GM12878 (cell line): ENCODE measurements at regions of chr3 and their contacts with region 1.

Region 1: GRCh38 chr3:156151824-156152428 is 31.5 kb downstream of the KCNAB1 start:
- DNase-seq: no peak
- ATAC-seq: peak; percentile 82
- H3K4me3 ChIP-seq: no peak overlapping the region
- H3K27ac ChIP-seq: no peak overlapping the region
- H3K4me1 ChIP-seq: no peaks in the 10 kb centered on the region
- H3K27me3 ChIP-seq: no peaks in the 10 kb centered on the region
- CTCF ChIP-seq: peak; percentile 72 to 78 (median 75)
- EP300 ChIP-seq: no peak
- POLR2A ChIP-seq: no peak
- RAD21 ChIP-seq: peak; percentile 85

Region 2: DNA sequence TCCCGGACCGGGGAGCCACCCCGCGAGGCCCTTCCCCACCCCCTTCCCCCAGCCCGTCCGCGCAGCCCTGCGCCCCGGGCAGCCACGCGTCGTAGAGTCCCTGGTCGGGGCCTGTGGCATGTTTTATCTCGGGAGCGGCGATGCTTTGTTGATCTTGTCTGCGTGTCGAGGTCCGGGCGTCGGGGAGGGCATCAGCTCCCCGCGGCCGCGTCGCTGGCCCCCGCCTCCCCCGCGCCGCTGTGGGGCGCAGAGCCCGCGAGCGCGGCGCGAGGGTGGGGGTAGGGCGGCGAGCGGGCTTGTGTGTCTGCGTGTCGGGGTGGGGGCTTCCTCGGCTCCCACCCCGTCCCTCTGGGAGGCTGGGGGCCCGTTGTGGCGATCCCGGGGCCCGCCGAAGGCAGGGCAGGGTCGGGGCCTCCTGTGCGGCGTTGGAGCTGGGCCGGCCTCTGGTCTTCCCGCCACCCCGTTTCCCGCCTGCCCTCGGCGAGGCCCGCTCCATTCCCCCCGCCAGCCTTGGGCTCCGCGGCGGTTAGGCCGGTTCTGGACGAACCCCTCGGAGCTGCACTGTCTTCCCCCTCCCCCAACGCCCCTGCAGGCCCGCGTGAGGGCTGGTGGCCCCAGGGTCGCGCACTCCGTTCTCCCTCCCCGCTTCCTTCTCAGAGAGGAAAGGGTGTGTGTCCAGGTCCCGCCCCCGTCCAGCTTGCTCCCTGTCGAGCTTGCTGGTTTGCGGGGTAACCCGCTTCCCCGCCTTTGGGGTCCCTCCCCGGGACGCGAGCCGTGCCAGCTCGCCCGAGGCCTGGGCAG is 280.8 kb before region 1 on chr3:
- CTCF ChIA-PET with region 1: no interaction called
- POLR2A ChIA-PET with region 1: no interaction called
- RAD21 ChIA-PET with region 1: no interaction called
- SMC1A ChIA-PET with region 1: no interaction called
- in situ Hi-C with region 1: no loop called
- intact Hi-C with region 1: no loop called
- DNase-seq: no peak
- ATAC-seq: peak; percentile 53
- H3K4me3 ChIP-seq: peak overlapping the region; percentile 85
- H3K27ac ChIP-seq: peak overlapping the region; percentile 89
- H3K4me1 ChIP-seq: peaks cover 2% of the 10 kb centered on the region
- H3K27me3 ChIP-seq: no peaks in the 10 kb centered on the region
- CTCF ChIP-seq: no peak
- EP300 ChIP-seq: no peak
- POLR2A ChIP-seq: peak; percentile 52
- RAD21 ChIP-seq: no peak

Region 3: DNA sequence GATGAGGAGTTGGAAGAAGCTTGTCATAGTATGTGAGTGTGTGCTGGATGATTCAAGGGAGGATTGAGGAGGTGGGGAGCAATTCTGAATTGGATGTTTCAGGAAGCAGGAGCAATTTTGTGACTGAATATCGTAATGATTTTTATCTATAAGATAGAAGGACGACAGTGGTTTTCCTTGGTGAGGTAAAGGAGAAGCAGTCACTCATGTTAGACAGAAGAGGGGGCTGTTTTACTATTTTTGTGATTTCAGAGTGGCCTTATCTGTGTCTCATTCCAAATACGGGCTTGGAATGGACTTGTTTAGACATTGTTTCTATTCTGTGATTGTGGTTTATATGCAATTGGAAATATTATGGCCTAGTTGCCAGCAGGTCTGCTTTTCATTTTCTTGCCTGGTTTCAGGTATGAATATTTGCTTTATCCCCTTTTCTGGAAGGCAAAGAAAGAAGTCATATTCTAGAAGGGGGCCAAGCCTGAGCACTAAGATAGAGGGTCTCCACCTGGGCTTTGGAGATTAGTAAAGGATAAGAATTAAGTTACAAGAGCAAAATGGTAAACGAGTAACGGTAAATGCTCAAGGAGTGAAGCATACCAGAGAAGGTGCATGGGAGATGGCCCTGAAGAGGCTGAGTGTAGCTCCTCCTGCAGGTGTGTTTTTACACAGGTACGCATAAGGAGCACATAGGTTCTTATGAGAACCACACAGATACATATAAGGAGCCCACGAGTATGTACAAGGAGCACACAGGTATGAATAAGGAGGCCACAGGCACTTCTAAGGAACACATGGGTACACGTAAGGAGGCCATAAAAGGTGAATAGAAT is 156.2 kb before region 1 on chr3:
- CTCF ChIA-PET with region 1: no interaction called
- POLR2A ChIA-PET with region 1: no interaction called
- RAD21 ChIA-PET with region 1: no interaction called
- SMC1A ChIA-PET with region 1: no interaction called
- in situ Hi-C with region 1: no loop called
- intact Hi-C with region 1: no loop called
- DNase-seq: no peak
- ATAC-seq: peak; percentile 73
- H3K4me3 ChIP-seq: no peak overlapping the region
- H3K27ac ChIP-seq: no peak overlapping the region
- H3K4me1 ChIP-seq: no peaks in the 10 kb centered on the region
- H3K27me3 ChIP-seq: no peaks in the 10 kb centered on the region
- CTCF ChIP-seq: peak; percentile 36 to 43 (median 39); a peak in 3 of 6 replicates
- EP300 ChIP-seq: no peak
- POLR2A ChIP-seq: no peak
- RAD21 ChIP-seq: peak; percentile 45

Region 4: DNA sequence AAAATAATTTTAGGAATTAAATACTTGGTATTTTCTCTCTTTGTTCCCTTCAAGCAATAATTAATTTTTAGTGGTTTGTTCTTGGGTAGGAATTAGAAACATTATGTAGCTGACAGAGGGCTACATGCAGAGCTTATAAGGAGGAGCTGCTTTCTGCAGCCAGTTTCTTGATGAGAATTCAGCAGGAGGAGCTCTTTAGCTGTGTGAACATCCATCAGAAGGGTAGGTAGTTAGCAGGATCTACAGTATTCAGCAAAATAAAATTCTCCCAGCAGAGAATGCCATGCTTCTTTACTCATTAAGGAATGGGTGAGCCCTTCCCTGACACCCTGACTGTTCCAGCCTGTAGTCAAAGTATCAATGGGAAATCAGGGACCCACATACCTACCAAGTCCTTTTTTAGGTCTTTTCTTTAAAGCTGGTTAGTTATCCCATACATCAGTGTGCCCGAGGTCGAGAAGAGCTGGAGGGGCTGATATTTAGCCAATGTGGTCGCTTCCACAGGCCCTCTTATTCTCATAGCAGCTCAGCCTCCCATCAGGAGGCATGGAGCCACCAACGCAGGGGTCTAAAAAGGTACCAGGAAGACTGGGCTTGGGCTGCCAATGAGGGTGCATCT is 22.4 kb after region 1 on chr3:
- CTCF ChIA-PET with region 1: interaction called, 10 read pairs
- POLR2A ChIA-PET with region 1: no interaction called
- RAD21 ChIA-PET with region 1: no interaction called
- SMC1A ChIA-PET with region 1: interaction called, 4 read pairs
- in situ Hi-C with region 1: no loop called
- intact Hi-C with region 1: no loop called
- DNase-seq: no peak
- ATAC-seq: no peak
- H3K4me3 ChIP-seq: no peak overlapping the region
- H3K27ac ChIP-seq: no peak overlapping the region
- H3K4me1 ChIP-seq: no peaks in the 10 kb centered on the region
- H3K27me3 ChIP-seq: no peaks in the 10 kb centered on the region; a peak in 1 of 4 replicates
- CTCF ChIP-seq: peak in 2 of 3 experiments; percentile 7 to 13; a peak in 2 of 6 replicates
- EP300 ChIP-seq: no peak
- POLR2A ChIP-seq: no peak
- RAD21 ChIP-seq: peak; percentile 27; the same call in 1 of the 2 replicates

Region 5: DNA sequence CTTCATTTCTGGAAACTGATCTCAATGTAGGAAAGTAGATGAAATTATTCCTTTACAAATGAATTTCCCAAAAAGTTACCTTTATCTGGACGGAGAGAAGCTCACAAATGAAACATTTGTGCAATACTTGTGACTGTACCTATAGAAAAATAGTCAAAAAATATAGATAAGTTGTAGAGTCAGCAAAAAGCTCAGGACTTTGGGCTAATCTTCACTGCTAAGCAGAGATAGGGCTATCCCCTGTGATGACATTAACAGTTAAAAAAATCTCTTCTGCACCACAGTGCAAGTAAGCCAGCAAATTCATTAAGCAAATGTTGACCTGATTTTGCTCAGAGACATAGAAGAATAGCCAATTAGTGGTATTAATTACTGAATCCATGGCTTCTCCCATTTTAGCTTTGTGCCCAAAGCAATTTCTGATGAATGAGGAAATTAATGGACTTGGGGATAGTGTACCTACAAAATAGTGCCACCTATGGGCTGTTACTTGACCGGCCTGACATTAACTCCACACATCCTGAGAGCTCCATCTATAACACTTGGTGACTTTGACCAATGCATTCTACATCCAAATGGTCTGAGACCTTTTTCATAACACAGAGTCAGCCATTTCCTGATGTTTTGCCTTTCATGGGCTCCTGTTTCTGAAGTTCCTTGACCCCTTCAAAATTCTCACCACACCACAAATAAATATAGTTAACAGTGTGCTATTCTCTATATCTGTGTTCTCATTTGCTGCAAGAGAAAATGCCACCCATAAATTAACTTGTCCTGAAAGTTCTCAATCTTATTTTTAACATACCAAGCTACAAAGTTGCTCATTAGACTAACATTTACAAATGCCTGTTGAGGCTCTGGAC is 298.0 kb after region 1 on chr3:
- CTCF ChIA-PET with region 1: interaction called, 34 read pairs
- POLR2A ChIA-PET with region 1: no interaction called
- RAD21 ChIA-PET with region 1: interaction called, 13 read pairs
- SMC1A ChIA-PET with region 1: interaction called, 10 read pairs
- in situ Hi-C with region 1: no loop called
- intact Hi-C with region 1: loop called (anchors 1 kb)
- DNase-seq: no peak
- ATAC-seq: peak; percentile 86
- H3K4me3 ChIP-seq: no peak overlapping the region
- H3K27ac ChIP-seq: no peak overlapping the region
- H3K4me1 ChIP-seq: no peaks in the 10 kb centered on the region
- H3K27me3 ChIP-seq: no peaks in the 10 kb centered on the region; a peak in 1 of 4 replicates
- CTCF ChIP-seq: peak; percentile 54 to 65 (median 65)
- EP300 ChIP-seq: no peak
- POLR2A ChIP-seq: no peak
- RAD21 ChIP-seq: peak; percentile 41

Region 6: DNA sequence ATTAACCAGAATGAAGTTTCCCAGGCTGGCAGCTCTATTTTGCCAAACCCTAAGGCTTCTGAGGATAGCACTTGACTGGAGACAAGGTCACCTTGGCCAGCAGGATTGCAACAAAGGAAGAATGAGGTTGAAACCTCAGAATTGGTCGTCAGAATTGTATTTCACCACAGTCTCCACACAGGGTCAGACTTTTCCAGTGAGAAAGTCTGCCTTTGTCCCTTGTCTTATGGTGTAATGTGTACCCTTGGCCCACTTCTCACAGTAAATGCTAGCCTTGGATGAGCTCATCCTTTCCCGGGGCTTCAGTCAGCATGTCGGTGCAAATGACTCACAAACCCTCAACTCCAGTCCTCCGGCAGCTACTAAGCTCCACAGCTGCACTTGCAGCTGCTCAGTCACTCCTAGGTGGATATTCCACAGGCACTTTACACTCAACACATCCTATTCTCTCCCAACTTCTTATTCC is 383.3 kb after region 1 on chr3:
- CTCF ChIA-PET with region 1: no interaction called
- POLR2A ChIA-PET with region 1: no interaction called
- RAD21 ChIA-PET with region 1: no interaction called
- SMC1A ChIA-PET with region 1: interaction called, 3 read pairs
- in situ Hi-C with region 1: no loop called
- intact Hi-C with region 1: loop called (anchors 2 kb)
- DNase-seq: no peak
- ATAC-seq: peak; percentile 53
- H3K4me3 ChIP-seq: no peak overlapping the region
- H3K27ac ChIP-seq: no peak overlapping the region
- H3K4me1 ChIP-seq: no peaks in the 10 kb centered on the region
- H3K27me3 ChIP-seq: no peaks in the 10 kb centered on the region
- CTCF ChIP-seq: peak in 1 of 3 experiments; percentile 28; a peak in 3 of 6 replicates
- EP300 ChIP-seq: no peak
- POLR2A ChIP-seq: 0 out of 2 replicates have a peak, but pooled peaks have one; percentile 30
- RAD21 ChIP-seq: peak; percentile 30

Region 7: DNA sequence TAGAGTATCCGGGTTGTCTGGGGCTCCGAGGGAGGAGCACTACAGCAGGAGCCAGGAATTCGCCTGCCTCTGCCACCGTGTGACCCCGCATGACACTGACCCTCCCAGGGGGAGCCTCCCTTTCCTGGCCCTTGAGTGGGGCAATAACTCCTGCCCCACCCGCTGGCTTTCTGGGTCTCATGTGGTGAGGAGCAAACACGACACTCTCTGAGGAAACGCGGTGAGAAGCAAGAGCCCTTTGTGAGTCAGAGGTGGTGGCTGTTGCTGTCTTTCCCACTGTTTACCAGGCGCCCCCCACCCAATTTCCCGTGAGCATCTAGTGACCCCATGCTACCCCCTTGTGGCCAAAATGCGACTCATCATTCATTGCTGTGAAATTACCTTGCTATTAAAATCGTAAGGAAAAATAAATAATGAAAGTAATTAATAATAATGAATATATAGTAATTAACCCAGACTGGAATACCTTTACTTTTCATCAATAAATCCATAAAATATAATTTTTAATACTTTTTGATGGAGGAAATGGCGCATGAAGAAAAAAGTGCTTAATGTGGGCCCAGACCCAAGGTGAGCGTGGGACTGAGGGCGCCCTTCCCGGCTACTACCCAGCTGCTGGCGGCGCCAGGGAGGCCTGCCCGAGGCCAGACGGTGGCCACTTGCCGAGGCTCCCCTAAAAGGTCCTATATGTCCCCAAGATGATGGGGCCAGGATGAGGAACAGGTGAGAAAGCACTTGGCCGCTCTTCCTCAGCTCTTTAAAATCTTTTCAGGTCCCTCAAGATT is 978.7 kb after region 1 on chr3:
- CTCF ChIA-PET with region 1: interaction called, 6 read pairs
- POLR2A ChIA-PET with region 1: no interaction called
- RAD21 ChIA-PET with region 1: no interaction called
- SMC1A ChIA-PET with region 1: interaction called, 3 read pairs
- in situ Hi-C with region 1: loop called (anchors 25 kb)
- intact Hi-C with region 1: no loop called
- DNase-seq: no peak
- ATAC-seq: no peak; the same call in 2 of the 3 replicates
- H3K4me3 ChIP-seq: no peak overlapping the region
- H3K27ac ChIP-seq: peak overlapping the region; percentile 44
- H3K4me1 ChIP-seq: peaks cover 34% of the 10 kb centered on the region
- H3K27me3 ChIP-seq: no peaks in the 10 kb centered on the region
- CTCF ChIP-seq: peak; percentile 59 to 69 (median 65)
- EP300 ChIP-seq: no peak
- POLR2A ChIP-seq: no peak
- RAD21 ChIP-seq: peak; percentile 80

Region 8: GRCh38 chr3:157589211-157589610 is 1437.3 kb after region 1 on chr3:
- CTCF ChIA-PET with region 1: no interaction called
- POLR2A ChIA-PET with region 1: no interaction called
- RAD21 ChIA-PET with region 1: no interaction called
- SMC1A ChIA-PET with region 1: no interaction called
- in situ Hi-C with region 1: no loop called
- intact Hi-C with region 1: no loop called
- DNase-seq: no peak
- ATAC-seq: no peak
- H3K4me3 ChIP-seq: no peak overlapping the region
- H3K27ac ChIP-seq: no peak overlapping the region
- H3K4me1 ChIP-seq: no peaks in the 10 kb centered on the region
- H3K27me3 ChIP-seq: no peaks in the 10 kb centered on the region; a peak in 1 of 4 replicates
- CTCF ChIP-seq: no peak
- EP300 ChIP-seq: no peak
- POLR2A ChIP-seq: no peak
- RAD21 ChIP-seq: no peak